PC-3 (cell line): ENCODE measurements at regions of chr19 and their contacts with region 1.

Region 1: DNA sequence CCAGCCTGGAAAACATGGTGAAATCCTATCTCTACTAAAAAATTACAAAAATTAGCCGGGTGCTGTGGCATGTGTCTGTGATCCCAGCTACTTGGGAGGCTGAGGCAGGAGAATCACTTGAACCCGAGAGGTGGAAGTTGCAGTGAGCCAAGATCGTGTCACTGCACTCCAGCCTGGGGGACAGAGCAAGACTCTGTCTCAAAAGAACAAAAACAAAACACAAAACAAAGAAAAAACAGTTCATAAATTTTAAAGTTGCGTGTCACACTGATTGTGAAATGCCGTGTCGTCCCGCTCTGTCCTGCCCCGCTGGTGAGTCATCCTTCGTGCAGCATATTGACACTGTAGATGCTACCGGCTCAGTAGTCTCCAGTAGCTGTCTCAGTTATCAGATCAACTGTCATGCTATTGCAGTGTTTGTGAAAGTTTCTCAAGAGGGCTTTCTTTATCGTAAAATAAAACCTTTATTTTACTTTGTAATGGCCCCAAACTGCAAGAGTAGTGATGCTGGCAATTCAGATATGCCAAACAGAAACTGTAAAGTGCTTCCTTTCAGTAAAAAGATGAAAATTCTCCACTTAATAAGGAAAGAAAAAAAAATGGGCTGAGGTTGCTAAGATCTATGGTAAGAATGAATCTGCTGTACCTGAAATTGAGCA is 36.4 kb upstream of the IGFL1 start:
- DNase-seq: peak; percentile 82
- ATAC-seq: peak; percentile 87
- H3K4me3 ChIP-seq: 0 out of 2 replicates have a peak overlapping the region, but pooled peaks have one; percentile 27
- H3K27ac ChIP-seq: no peak overlapping the region
- H3K4me1 ChIP-seq: peaks cover 12% of the 10 kb centered on the region
- H3K27me3 ChIP-seq: peaks cover 12% of the 10 kb centered on the region
- CTCF ChIP-seq: no peak

Region 2: DNA sequence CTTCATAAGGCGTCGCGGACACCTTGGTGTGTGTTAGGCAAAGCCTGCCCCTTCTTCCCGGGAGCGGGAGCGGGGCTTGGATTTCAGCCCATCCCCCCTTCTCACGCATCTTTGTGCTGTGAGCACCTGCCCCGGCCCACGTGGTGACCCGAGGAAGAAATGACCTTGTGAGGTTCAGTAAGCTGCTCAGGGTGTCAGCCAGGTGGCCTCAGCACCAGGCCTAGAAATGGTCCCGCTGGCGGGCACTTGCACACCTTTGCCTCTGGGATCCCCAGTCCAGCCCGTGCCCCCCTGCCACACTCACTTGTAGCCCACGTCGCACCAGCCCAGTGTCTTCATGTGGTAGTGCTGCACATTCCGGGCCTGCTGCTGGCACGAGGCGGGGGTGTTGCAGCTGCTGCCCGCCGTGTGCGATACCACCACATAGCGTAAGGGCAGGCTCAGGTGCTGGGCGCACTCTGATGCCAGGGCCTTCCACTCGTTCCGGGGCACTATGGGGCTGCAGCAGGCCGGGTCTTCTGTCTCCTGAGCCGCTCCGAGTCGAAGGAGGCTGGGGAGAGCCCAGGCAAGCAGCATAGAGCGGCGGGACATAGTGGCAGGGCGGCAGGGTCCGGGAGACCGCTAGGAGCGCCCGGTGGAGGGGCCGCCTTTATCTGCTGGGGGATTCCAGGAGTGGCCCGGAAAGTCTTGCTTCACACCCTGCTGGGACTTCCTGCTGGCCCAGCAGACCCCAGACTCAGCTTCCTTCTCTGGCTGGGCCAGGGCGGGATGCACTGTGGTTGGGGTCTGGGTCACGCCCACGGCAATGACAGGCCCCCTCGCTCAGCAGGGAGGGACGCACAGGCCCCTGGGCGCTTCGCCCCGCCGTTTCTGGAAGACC is 170.4 kb before region 1 on chr19 and contains the start of gene PGLYRP1:
- CTCF ChIA-PET with region 1: no interaction called
- POLR2A ChIA-PET with region 1: no interaction called
- intact Hi-C with region 1: loop called (anchors 5 kb)
- DNase-seq: no peak
- ATAC-seq: no peak
- H3K4me3 ChIP-seq: no peak within 1 kb of the TSS
- H3K27ac ChIP-seq: no peak within 1 kb of the TSS
- H3K4me1 ChIP-seq: no peaks in the 10 kb centered on the region
- H3K27me3 ChIP-seq: no peaks in the 10 kb centered on the region
- CTCF ChIP-seq: no peak
- total RNA-seq, gene PGLYRP1: not detected in 2 replicates

Region 3: DNA sequence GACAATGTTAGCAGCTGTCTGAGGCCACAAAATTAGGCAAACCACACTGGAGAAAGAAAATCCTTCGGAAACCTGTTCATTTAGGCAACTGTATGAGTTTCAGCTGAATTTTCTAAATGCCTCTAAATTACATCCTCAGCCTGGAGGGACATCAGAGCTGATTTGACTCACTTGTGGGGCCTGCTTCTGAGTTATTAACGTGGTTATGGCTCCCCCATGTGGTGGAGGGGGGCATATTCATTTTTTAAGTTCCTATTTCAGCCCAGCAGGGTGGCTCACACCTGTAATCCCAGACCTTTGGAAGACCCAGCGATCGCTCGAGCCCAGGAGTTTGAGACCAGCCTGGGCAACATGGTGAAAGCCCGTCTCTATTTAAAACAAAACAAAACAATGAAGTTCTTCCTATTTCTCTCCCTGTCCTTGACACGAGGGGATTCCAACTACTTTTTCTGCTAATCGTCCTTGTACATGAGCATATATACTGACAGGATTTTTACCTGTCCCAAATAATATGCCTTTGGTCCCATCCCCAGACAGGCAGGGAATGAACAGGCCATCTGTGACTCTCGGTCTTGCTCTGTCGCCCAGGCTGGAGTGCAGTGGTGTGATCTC is 72.2 kb after region 1 on chr19:
- CTCF ChIA-PET with region 1: interaction called, 4 read pairs
- POLR2A ChIA-PET with region 1: no interaction called
- intact Hi-C with region 1: loop called (anchors 2 kb)
- DNase-seq: peak; percentile 75
- ATAC-seq: peak; percentile 83
- H3K4me3 ChIP-seq: no peak overlapping the region
- H3K27ac ChIP-seq: no peak overlapping the region
- H3K4me1 ChIP-seq: peaks cover 8% of the 10 kb centered on the region
- H3K27me3 ChIP-seq: no peaks in the 10 kb centered on the region
- CTCF ChIP-seq: peak; percentile 77